ENCODE measurements at regions of chr7 and their contacts with region 1.

Region 1: DNA sequence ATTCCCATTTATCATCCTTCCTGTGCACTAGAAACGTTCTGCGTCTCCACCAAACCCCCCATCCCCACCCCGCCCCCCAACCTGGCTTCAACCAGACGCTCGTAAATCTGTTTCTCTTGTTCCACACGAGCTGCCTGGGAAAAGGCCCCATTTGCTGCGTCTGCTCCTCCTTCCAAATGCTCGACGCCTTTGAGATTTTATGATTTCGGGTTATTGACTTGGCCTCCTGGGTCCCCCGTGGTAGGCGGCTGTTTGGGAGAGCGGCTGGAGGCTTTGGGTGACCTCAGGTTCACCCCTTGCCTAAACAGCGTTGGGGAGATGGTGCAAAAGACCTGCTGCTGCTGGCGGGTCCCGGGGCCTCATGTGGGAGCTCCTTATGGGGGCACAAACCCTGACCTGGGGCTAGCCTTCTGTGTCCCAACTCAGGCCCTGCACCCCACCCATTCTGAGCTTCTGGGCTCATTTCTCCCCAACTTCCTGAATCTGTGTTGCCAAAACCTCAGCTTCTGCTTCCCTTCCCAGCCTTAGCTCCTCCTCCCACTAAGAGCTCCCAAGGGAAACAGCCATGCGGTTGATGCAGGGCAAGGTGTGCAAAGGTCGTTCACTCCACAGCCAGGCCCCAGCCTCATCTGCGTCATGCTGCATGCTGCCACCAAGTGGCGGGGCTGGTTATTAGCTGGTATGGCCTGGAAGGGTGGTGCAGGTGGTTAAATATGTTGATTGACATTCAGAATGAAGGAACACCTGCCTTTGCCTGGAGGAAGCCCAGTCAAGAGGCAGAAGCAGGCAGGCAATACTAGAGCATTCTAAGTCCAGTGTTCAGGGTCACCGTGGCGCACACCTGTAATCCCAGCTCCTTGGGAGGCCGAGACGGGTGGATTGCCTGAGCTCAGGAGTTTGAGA is 49.1 kb upstream of the ELN start:
- DNase-seq: peak; percentile 45
- ATAC-seq: peak; percentile 99
- H3K4me3 ChIP-seq: no peak overlapping the region
- H3K27ac ChIP-seq: no peak overlapping the region
- H3K4me1 ChIP-seq: no peaks in the 10 kb centered on the region
- H3K27me3 ChIP-seq: no peaks in the 10 kb centered on the region
- CTCF ChIP-seq: peak; percentile 48 to 76 (median 76)
- EP300 ChIP-seq: no peak
- POLR2A ChIP-seq: no peak
- RAD21 ChIP-seq: peak; percentile 42; the same call in 1 of the 2 replicates

Region 2: GRCh38 chr7:73799267-73800141 is 179.4 kb before region 1 on chr7:
- CTCF ChIA-PET with region 1: no interaction called
- POLR2A ChIA-PET with region 1: no interaction called
- RAD21 ChIA-PET with region 1: no interaction called
- SMC1A ChIA-PET with region 1: no interaction called
- in situ Hi-C with region 1: no loop called
- intact Hi-C with region 1: no loop called
- DNase-seq: no peak
- ATAC-seq: no peak
- H3K4me3 ChIP-seq: no peak overlapping the region
- H3K27ac ChIP-seq: no peak overlapping the region
- H3K4me1 ChIP-seq: no peaks in the 10 kb centered on the region
- H3K27me3 ChIP-seq: no peaks in the 10 kb centered on the region
- CTCF ChIP-seq: no peak
- EP300 ChIP-seq: no peak
- POLR2A ChIP-seq: no peak
- RAD21 ChIP-seq: no peak

Region 3: DNA sequence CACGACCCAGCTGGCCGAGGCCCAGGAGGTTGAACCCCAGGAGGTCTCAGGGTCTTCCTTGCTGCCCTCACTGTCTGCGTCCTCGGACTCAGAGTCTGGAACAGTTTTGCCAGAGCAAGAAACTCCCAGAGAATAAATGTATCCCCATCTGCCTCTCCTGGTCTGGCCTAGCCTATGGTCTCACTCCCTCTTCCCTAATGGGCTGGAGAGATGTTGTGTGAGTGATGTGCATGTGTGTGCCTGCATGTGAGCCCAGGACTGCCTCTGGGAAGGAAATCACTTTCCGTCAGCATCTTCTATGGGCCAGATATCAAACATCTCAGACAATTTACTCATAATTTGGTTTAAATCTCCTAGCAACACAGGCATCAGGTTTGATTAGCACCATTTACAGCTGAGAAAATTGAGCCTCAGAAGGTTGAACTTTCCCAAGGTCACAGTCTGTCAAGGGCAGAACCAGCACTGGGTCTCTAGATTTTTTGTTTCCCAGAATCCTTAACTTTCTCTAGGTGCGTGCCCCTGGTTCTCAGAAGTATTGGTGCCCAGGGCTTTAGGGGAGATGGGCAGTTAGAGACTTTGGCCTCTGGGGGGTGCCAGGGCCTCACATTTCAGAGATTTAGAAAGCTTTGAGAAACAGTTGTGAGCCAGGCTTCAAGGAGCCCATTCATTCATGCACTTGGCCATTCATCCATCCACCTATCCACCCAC is 113.0 kb before region 1 on chr7:
- CTCF ChIA-PET with region 1: interaction called, 6 read pairs
- POLR2A ChIA-PET with region 1: no interaction called
- RAD21 ChIA-PET with region 1: interaction called, 5 read pairs
- SMC1A ChIA-PET with region 1: no interaction called
- in situ Hi-C with region 1: no loop called
- intact Hi-C with region 1: loop called (anchors 2 kb)
- DNase-seq: no peak
- ATAC-seq: peak; percentile 84
- H3K4me3 ChIP-seq: no peak overlapping the region
- H3K27ac ChIP-seq: no peak overlapping the region
- H3K4me1 ChIP-seq: no peaks in the 10 kb centered on the region
- H3K27me3 ChIP-seq: no peaks in the 10 kb centered on the region
- CTCF ChIP-seq: peak; percentile 44 to 63 (median 59); a peak in 5 of 6 replicates
- EP300 ChIP-seq: no peak
- POLR2A ChIP-seq: no peak
- RAD21 ChIP-seq: peak; percentile 81

Region 4: GRCh38 chr7:74115326-74115725 is 136.4 kb after region 1 on chr7:
- CTCF ChIA-PET with region 1: no interaction called
- POLR2A ChIA-PET with region 1: no interaction called
- RAD21 ChIA-PET with region 1: no interaction called
- SMC1A ChIA-PET with region 1: no interaction called
- in situ Hi-C with region 1: no loop called
- intact Hi-C with region 1: no loop called
- DNase-seq: no peak
- ATAC-seq: no peak
- H3K4me3 ChIP-seq: no peak overlapping the region
- H3K27ac ChIP-seq: no peak overlapping the region
- H3K4me1 ChIP-seq: no peaks in the 10 kb centered on the region
- H3K27me3 ChIP-seq: no peaks in the 10 kb centered on the region
- CTCF ChIP-seq: no peak
- EP300 ChIP-seq: no peak
- POLR2A ChIP-seq: no peak
- RAD21 ChIP-seq: no peak